GM18951 (cell line): ENCODE measurements at regions of chr1 and their contacts with region 1.

Region 1: GRCh38 chr1:110203021-110203661 is 7.0 kb upstream of the KCNC4 start:
- POLR2A ChIP-seq: no peak

Region 2: DNA sequence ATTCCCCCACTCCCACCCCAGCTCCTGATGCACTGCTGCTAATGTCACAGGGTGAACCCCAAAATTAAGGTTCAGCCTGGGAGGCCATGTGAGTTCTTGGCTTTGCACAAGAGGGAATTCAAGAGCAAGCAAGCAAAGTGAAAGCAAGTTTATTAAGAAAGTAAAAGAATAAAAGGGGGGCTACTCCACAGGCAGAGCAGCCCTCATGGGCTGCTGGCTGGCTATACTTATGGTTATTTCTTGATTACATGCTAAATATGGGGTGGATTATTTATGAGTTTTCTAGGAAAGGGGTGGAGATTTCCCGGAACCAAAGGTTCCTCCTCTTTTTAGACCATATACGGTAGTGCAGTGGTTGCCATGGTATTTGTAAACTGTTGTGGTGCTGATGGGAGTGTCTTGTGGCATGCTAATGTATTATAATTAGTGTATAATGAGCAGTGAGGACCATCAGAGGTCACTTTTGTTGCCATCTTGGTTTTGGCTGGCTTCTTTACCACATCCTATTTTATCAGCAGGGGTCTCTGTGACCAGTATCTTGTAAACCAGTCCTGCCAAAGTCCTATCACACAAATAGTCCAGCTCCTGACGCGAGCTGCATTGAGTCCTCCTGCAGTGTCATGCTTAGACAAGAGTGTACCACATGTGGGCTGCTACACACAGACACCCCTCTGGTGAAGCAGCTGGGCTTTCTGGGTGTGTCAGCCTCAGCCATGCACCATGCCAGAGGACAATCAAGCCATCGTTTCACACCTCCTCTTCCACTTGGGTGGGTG is 338.9 kb before region 1 on chr1:
- in situ Hi-C with region 1: no loop called
- POLR2A ChIP-seq: no peak

Region 3: DNA sequence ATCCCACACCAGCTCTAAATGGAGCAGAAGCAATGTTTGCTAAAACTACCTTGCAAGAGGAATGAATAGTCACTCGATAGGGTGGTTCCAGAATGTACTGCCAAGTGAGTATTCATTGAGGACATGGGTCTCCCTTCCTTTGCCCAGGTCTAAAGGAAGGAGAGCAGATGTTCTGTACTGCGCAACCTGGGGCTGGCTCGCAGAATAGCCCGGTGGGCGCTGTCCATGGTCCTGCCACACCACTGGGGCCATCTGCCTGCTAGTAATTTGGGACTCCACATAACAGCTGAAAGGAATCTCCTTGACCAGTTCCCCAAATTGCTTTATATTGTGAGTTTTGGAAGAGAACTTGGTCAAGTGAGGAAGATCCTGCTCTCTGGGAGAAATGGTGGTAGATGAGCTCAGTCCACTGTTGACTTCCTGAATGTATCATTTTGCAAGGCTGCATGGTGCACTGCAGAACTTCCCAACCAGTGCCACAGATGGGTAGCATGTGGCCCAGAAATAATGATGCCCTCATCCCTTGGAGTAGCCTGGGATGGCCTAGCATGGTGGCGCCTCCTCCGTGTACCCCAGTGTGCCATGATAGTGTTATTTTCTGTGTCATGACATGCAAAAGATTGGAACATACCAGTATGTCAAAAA is 47.1 kb before region 1 on chr1:
- in situ Hi-C with region 1: no loop called
- POLR2A ChIP-seq: no peak

Region 4: GRCh38 chr1:110312188-110313121 is 109.3 kb after region 1 on chr1:
- in situ Hi-C with region 1: loop called (anchors 5 kb)
- POLR2A ChIP-seq: no peak

Region 5: GRCh38 chr1:110460253-110461220 is 257.4 kb after region 1 on chr1:
- in situ Hi-C with region 1: loop called (anchors 5 kb)
- POLR2A ChIP-seq: no peak